Sigmoid colon (tissue), 7 donors: ENCODE measurements at regions of chr6 and their contacts with region 1.

Region 1: GRCh38 chr6:150417899-150418826 is 49.4 kb downstream of the IYD start:
- DNase-seq: no peak
- H3K4me3 ChIP-seq: peak overlapping the region in 3 of 4 donors; percentile 40 to 43 (median 41)
- H3K27ac ChIP-seq: peak overlapping the region; percentile 42 to 68 (median 50)
- H3K4me1 ChIP-seq: peaks cover 0 to 17% (median 8%) of the 10 kb centered on the region in 4 donors
- H3K27me3 ChIP-seq: no peaks in the 10 kb centered on the region
- CTCF ChIP-seq: peak; percentile 57 to 78 (median 70)
- EP300 ChIP-seq: no peak
- POLR2A ChIP-seq: no peak

Region 2: DNA sequence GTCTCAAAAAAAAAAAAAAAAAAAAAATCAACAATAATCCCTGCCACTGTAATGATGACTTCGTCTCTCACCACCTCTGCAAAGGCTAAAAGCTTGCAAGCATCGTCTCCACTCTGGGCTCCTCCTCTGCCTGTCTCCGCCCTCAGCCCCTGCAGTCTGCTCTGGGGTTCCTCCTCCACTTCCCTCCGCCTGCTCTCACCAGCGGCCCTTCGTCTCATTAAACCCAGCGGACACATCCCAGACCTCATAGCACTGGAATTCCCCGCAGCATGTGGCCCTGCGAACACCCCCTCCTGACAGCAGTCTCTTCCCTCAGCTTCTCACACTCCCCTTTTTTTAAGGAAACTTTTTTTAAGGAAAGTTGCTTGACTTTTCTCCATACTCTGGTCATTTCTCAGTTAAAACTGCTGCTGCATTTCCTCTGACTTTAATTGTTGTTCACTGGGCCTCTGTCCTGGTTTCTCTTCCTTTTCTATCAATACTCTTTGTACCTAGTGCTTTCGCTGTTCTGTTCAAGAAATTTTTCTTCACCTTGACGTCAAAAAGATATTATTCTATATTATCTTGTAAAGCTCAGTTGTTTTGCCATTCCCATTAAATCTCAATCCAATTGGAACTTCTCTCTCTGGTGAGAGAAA is 110.6 kb after region 1 on chr6:
- intact Hi-C with region 1: loop called (anchors 2 kb)
- DNase-seq: peak; percentile 91
- H3K4me3 ChIP-seq: no peak overlapping the region
- H3K27ac ChIP-seq: peak overlapping the region in 3 of 4 donors; percentile 62 to 79 (median 77)
- H3K4me1 ChIP-seq: peaks cover 0 to 31% (median 23%) of the 10 kb centered on the region in 4 donors
- H3K27me3 ChIP-seq: no peaks in the 10 kb centered on the region
- CTCF ChIP-seq: no peak
- EP300 ChIP-seq: peak in 2 of 4 donors; percentile 40 to 53
- POLR2A ChIP-seq: no peak

Region 3: DNA sequence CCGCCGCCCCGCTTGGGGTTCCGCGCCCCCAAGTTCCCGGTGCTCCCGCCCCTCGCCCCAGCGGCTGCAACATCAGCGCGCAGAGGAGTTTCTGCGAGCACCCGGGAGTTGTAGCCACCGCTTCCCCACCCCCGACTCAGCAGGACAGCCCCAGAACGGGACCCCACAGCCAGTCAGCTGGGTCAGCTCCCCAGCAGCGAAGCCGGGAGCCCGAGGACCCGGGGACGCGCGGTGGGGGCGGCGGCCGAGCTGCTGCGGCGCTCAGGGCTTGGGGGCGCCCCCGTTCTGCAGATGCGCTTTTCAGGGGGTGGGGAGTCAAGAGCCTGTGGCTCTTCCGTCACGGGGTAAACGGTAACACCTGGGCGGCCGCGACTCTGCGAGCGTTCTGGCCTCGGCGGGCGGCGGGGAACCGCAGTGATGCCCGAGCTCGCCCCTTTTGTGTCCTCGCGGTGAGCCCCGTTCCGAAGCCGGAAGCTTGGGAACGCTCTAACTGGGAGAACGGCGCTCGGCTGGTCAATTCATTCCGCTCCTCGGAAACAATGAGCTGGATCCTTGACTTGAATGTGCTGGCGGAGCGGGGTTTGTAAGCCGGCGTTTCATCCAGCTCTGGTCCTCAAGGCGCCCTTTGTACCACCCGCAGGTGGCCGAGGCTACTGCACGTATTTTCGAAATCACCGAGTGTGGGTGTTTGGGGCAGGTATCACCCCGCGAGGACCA is 182.3 kb after region 1 on chr6:
- intact Hi-C with region 1: loop called (anchors 1 kb)
- DNase-seq: peak; percentile 84
- H3K4me3 ChIP-seq: peak overlapping the region; percentile 60 to 85 (median 74)
- H3K27ac ChIP-seq: peak overlapping the region; percentile 74 to 81 (median 80)
- H3K4me1 ChIP-seq: peaks cover 0 to 16% (median 3%) of the 10 kb centered on the region in 4 donors
- H3K27me3 ChIP-seq: no peaks in the 10 kb centered on the region
- CTCF ChIP-seq: peak; percentile 38 to 64 (median 54)
- EP300 ChIP-seq: no peak
- POLR2A ChIP-seq: no peak

Region 4: DNA sequence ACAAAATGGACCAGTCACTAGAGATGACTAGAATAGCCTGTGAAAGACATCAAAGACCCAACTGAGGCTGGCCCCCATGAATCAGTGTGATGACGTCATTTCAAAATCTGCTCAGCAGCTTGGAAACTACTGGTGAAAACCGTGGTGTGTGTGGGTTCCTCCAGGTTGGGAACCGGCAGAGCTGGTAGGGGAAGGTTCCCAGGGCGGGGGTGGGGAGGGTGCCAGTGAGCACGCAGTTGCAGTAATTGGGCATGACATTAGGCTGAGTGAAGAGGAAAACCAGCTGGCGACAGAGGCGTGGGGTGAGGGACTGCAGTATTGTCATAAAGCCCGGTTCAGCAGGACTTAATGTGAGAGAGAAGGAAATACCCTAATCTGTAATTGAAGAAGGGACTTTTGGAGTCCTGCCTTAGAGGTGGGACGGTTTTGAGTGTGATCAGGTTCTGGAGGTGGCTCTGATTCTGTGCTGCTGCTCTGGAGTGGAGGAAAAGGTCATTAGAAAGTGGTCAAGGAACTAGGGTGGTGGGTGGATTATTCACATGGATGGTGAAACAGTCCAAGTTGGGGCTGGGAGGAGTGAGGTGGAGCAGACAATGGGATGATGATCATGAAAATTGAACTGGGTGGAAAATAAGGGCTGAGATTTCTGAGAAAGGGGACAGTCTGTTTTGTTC is 395.3 kb after region 1 on chr6:
- intact Hi-C with region 1: loop called (anchors 1 kb)
- DNase-seq: no peak
- H3K4me3 ChIP-seq: no peak overlapping the region
- H3K27ac ChIP-seq: peak overlapping the region in 3 of 4 donors; percentile 16 to 52 (median 27)
- H3K4me1 ChIP-seq: peaks cover 0 to 22% (median 8%) of the 10 kb centered on the region in 4 donors
- H3K27me3 ChIP-seq: no peaks in the 10 kb centered on the region
- CTCF ChIP-seq: no peak
- EP300 ChIP-seq: no peak
- POLR2A ChIP-seq: no peak

Region 5: DNA sequence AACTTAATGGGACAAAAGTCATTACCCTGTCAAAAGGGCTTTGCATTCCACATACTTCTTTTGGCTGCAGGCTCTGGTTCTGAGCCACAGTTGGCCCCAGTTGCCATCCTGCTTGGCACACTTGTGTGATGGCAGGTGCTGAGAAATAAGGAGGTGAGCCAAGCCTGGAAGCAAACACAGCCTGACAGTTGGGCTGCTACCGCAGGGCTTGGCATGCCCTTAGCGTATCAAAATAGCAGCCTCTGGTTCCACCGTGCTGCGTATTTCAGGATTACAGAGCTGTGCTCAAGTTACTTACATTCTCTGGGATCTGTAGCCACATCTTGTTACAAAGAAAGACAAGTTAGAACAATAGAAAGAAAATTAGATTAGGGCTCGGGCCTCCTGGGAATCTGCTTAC is 458.4 kb after region 1 on chr6:
- intact Hi-C with region 1: loop called (anchors 5 kb)
- DNase-seq: peak; percentile 85
- H3K4me3 ChIP-seq: no peak overlapping the region
- H3K27ac ChIP-seq: peak overlapping the region in 3 of 4 donors; percentile 60 to 70 (median 61)
- H3K4me1 ChIP-seq: peaks cover 0 to 40% (median 25%) of the 10 kb centered on the region in 4 donors
- H3K27me3 ChIP-seq: no peaks in the 10 kb centered on the region
- CTCF ChIP-seq: peak; percentile 23 to 38 (median 30)
- EP300 ChIP-seq: peak in 1 of 4 donors; percentile 20
- POLR2A ChIP-seq: no peak